ENCODE measurements at regions of chr16 and their contacts with region 1.

Region 1: DNA sequence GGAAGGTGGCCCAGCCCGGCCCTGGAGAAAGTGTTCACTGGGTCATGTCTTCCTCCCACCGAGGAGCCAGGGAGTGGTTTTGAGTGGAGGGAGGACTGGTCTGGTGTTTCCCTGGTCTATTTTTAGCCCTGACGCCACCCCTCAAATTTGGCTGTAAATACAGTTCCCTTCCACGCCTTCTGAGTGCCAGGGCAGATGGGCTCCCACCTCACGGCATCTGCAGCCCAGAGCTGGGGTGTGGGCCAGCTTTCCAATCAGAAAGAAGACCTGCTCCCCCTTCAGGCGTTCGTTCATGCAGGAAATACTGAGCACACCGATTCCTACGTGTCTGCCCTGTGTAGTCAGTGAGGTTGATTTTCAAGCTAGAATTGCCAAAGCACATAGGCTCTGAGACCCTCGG is 53.7 kb downstream of the SNX20 start:
- DNase-seq: peak; percentile 38
- H3K4me3 ChIP-seq: no peak overlapping the region
- H3K27ac ChIP-seq: no peak overlapping the region
- H3K4me1 ChIP-seq: no peaks in the 10 kb centered on the region
- H3K27me3 ChIP-seq: no peaks in the 10 kb centered on the region
- CTCF ChIP-seq: peak in 2 of 4 experiments; percentile 51 to 61
- POLR2A ChIP-seq: no peak

Region 2: GRCh38 chr16:50548125-50548908 is 79.1 kb before region 1 on chr16 and contains the start of gene NKD1:
- intact Hi-C with region 1: loop called (anchors 5 kb)
- DNase-seq: peak; percentile 68
- H3K4me3 ChIP-seq: peak within 1 kb of the TSS; percentile 63 to 77
- H3K27ac ChIP-seq: peak within 1 kb of the TSS; percentile 41 to 72
- H3K4me1 ChIP-seq: no peaks in the 10 kb centered on the region
- H3K27me3 ChIP-seq: no peaks in the 10 kb centered on the region
- CTCF ChIP-seq: peak in 1 of 4 experiments; percentile 2
- POLR2A ChIP-seq: no peak
- total RNA-seq, gene NKD1: 7.0 to 13.8 TPM

Region 3: GRCh38 chr16:50559804-50560514 is 67.5 kb before region 1 on chr16:
- intact Hi-C with region 1: no loop called
- DNase-seq: no peak
- H3K4me3 ChIP-seq: no peak overlapping the region
- H3K27ac ChIP-seq: no peak overlapping the region
- H3K4me1 ChIP-seq: no peaks in the 10 kb centered on the region
- H3K27me3 ChIP-seq: no peaks in the 10 kb centered on the region
- CTCF ChIP-seq: no peak
- POLR2A ChIP-seq: no peak

Measured in prostate gland (tissue), 2 donors.